ENCODE measurements at regions of chr1 and their contacts with region 1.

Region 1: GRCh38 chr1:21324368-21325141 is 34.3 kb upstream of the ECE1 start:
- DNase-seq: no peak
- H3K4me3 ChIP-seq: no peak overlapping the region
- H3K27ac ChIP-seq: peak overlapping the region; percentile 14; the same call in 1 of the 2 replicates
- H3K4me1 ChIP-seq: peaks cover 24 to 72% (median 55%) of the 10 kb centered on the region in 4 experiments
- H3K27me3 ChIP-seq: no peaks in the 10 kb centered on the region
- CTCF ChIP-seq: no peak
- EP300 ChIP-seq: no peak
- POLR2A ChIP-seq: no peak
- RAD21 ChIP-seq: no peak

Region 2: GRCh38 chr1:21302747-21303715 is 21.5 kb before region 1 on chr1:
- CTCF ChIA-PET with region 1: interaction called, 45 read pairs
- POLR2A ChIA-PET with region 1: interaction called, 3 read pairs
- DNase-seq: no peak
- H3K4me3 ChIP-seq: no peak overlapping the region
- H3K27ac ChIP-seq: no peak overlapping the region
- H3K4me1 ChIP-seq: peaks cover 4 to 19% (median 10%) of the 10 kb centered on the region in 4 experiments
- H3K27me3 ChIP-seq: no peaks in the 10 kb centered on the region
- CTCF ChIP-seq: no peak
- EP300 ChIP-seq: no peak
- POLR2A ChIP-seq: no peak
- RAD21 ChIP-seq: peak; percentile 16 to 29; a peak in 2 of 4 replicates

Region 3: GRCh38 chr1:21308847-21309652 is 15.5 kb before region 1 on chr1:
- CTCF ChIA-PET with region 1: interaction called, 168 read pairs
- POLR2A ChIA-PET with region 1: interaction called, 4 read pairs
- DNase-seq: no peak
- H3K4me3 ChIP-seq: no peak overlapping the region
- H3K27ac ChIP-seq: no peak overlapping the region
- H3K4me1 ChIP-seq: peaks cover 15 to 40% (median 22%) of the 10 kb centered on the region in 4 experiments
- H3K27me3 ChIP-seq: no peaks in the 10 kb centered on the region
- CTCF ChIP-seq: no peak
- EP300 ChIP-seq: no peak
- POLR2A ChIP-seq: no peak
- RAD21 ChIP-seq: no peak

Measured in H1 (cell line).